GM12878 (cell line): ENCODE measurements at regions of chr15 and their contacts with region 1.

Region 1: DNA sequence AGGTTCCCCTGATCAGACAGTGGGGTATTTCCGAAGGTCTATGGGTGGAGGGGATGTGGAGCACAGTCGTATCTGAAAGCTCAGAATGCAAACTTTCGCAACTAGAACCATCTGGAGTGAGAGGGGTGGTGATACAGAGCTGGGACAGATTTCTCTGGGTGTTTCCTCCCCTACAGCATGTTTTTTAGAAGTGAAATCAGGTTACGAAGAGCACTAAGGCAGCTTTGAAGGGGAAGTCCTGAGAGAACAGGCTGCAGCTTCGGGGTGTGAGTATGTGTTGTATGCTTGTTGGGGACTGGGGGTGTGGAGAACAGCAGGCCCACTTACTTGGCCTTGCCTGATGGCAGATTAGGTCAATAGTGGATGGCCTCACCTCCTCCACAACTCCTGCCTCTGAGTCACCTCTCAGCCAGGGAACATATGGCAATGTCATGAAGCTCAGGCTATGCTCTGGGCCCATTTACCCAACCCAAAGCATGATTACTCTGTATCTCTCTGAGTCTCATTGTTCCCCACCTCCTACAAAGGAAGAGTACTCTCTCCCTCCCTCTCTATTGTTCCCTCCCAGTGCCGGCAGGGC is 107.2 kb upstream of the RASGRP1 start:
- DNase-seq: peak; percentile 91
- ATAC-seq: peak; percentile 76
- H3K4me3 ChIP-seq: no peak overlapping the region
- H3K27ac ChIP-seq: peak overlapping the region; percentile 77
- H3K4me1 ChIP-seq: peaks cover 56% of the 10 kb centered on the region
- H3K27me3 ChIP-seq: no peaks in the 10 kb centered on the region
- CTCF ChIP-seq: no peak
- EP300 ChIP-seq: peak in 1 of 2 experiments; percentile 7; a peak in 2 of 4 replicates
- POLR2A ChIP-seq: peak; percentile 61
- RAD21 ChIP-seq: no peak; the same call in 1 of the 2 replicates

Region 2: GRCh38 chr15:38554354-38554753 is 117.4 kb before region 1 on chr15:
- CTCF ChIA-PET with region 1: interaction called, 3 read pairs
- POLR2A ChIA-PET with region 1: interaction called, 84 read pairs
- RAD21 ChIA-PET with region 1: interaction called, 181 read pairs
- SMC1A ChIA-PET with region 1: interaction called, 130 read pairs
- in situ Hi-C with region 1: no loop called
- intact Hi-C with region 1: no loop called
- DNase-seq: no peak
- ATAC-seq: peak; percentile 80
- H3K4me3 ChIP-seq: no peak overlapping the region
- H3K27ac ChIP-seq: peak overlapping the region; percentile 59; the same call in 1 of the 2 replicates
- H3K4me1 ChIP-seq: peaks cover 45% of the 10 kb centered on the region
- H3K27me3 ChIP-seq: no peaks in the 10 kb centered on the region
- CTCF ChIP-seq: no peak
- EP300 ChIP-seq: no peak
- POLR2A ChIP-seq: no peak
- RAD21 ChIP-seq: no peak

Region 3: GRCh38 chr15:38602901-38603670 is 68.7 kb before region 1 on chr15:
- CTCF ChIA-PET with region 1: interaction called, 3 read pairs
- POLR2A ChIA-PET with region 1: no interaction called
- RAD21 ChIA-PET with region 1: interaction called, 13 read pairs
- SMC1A ChIA-PET with region 1: interaction called, 1,803 read pairs
- in situ Hi-C with region 1: no loop called
- intact Hi-C with region 1: no loop called
- DNase-seq: no peak
- ATAC-seq: peak; percentile 22; the same call in 2 of the 3 replicates
- H3K4me3 ChIP-seq: no peak overlapping the region
- H3K27ac ChIP-seq: no peak overlapping the region
- H3K4me1 ChIP-seq: no peaks in the 10 kb centered on the region; the same call in 1 of the 2 replicates
- H3K27me3 ChIP-seq: peaks cover 0 to 3% of the 10 kb centered on the region in 2 experiments; a peak in 1 of 4 replicates
- CTCF ChIP-seq: no peak
- EP300 ChIP-seq: no peak
- POLR2A ChIP-seq: no peak
- RAD21 ChIP-seq: no peak

Region 4: DNA sequence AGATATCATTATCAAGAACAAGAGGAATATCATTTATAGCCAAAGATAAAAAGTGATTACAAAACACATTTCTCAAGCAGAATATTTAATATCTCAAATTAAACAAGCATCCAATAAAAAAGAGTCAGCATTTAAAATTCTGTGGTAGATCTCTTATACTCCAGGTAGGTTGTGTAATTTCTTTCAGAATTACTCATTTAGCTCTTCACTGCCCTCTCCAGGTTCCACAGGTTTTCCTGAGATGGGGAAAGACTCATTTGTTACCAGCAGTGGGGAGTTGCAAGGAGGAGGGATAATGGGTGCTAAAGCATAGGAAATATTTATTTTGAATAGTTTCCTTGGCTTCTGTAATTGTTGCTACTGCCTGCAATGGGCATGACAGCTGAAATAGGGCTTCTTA is 24.1 kb before region 1 on chr15:
- CTCF ChIA-PET with region 1: interaction called, 112 read pairs
- POLR2A ChIA-PET with region 1: interaction called, 367 read pairs
- RAD21 ChIA-PET with region 1: interaction called, 517 read pairs
- SMC1A ChIA-PET with region 1: interaction called, 1,803 read pairs
- in situ Hi-C with region 1: no loop called
- intact Hi-C with region 1: no loop called
- DNase-seq: no peak
- ATAC-seq: no peak
- H3K4me3 ChIP-seq: no peak overlapping the region
- H3K27ac ChIP-seq: no peak overlapping the region
- H3K4me1 ChIP-seq: peaks cover 27% of the 10 kb centered on the region
- H3K27me3 ChIP-seq: no peaks in the 10 kb centered on the region
- CTCF ChIP-seq: peak in 2 of 3 experiments; percentile 5 to 17; a peak in 1 of 6 replicates
- EP300 ChIP-seq: no peak
- POLR2A ChIP-seq: no peak
- RAD21 ChIP-seq: peak; percentile 23; the same call in 1 of the 2 replicates

Region 5: GRCh38 chr15:38660738-38661137 is 11.0 kb before region 1 on chr15:
- CTCF ChIA-PET with region 1: interaction called, 75 read pairs
- POLR2A ChIA-PET with region 1: interaction called, 367 read pairs
- RAD21 ChIA-PET with region 1: interaction called, 517 read pairs
- SMC1A ChIA-PET with region 1: interaction called, 513 read pairs
- in situ Hi-C with region 1: no loop called
- intact Hi-C with region 1: loop called (anchors 1 kb)
- DNase-seq: no peak
- ATAC-seq: peak; percentile 67
- H3K4me3 ChIP-seq: no peak overlapping the region
- H3K27ac ChIP-seq: no peak overlapping the region
- H3K4me1 ChIP-seq: no peaks in the 10 kb centered on the region; the same call in 1 of the 2 replicates
- H3K27me3 ChIP-seq: no peaks in the 10 kb centered on the region
- CTCF ChIP-seq: no peak
- EP300 ChIP-seq: no peak
- POLR2A ChIP-seq: no peak
- RAD21 ChIP-seq: no peak